Activated CD8-positive, alpha-beta T cell treated with anti-CD3 and anti-CD28 coated beads for 36 hours (primary cell): ENCODE measurements at regions of chr3 and their contacts with region 1.

Region 1: DNA sequence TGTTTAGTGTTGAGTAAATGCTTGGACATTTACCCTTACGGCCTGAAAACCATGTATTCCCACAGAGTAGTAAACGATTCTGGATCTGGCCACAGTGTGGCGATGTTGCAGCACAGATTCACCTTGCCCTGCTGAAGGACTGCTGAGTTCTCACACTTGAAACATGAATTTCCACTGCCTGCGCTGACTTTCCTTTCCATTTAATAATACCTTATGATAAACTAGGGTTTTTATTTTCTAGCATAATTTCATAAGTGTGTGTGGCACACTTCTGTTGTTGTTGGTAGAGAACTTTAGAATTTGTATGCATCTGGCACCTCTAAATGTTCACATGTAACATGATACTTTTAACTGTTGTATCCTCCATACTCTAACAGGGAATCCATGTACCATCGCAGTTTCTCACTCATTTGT is 53.9 kb downstream of the C3orf38 start:
- DNase-seq: peak; percentile 76
- ATAC-seq: peak; percentile 89
- H3K4me3 Mint-ChIP-seq: no peak overlapping the region
- H3K27ac Mint-ChIP-seq: no peak overlapping the region
- H3K4me1 Mint-ChIP-seq: no peaks in the 10 kb centered on the region
- H3K27me3 Mint-ChIP-seq: peaks cover 2% of the 10 kb centered on the region
- CTCF ChIP-seq: peak; percentile 83

Region 2: DNA sequence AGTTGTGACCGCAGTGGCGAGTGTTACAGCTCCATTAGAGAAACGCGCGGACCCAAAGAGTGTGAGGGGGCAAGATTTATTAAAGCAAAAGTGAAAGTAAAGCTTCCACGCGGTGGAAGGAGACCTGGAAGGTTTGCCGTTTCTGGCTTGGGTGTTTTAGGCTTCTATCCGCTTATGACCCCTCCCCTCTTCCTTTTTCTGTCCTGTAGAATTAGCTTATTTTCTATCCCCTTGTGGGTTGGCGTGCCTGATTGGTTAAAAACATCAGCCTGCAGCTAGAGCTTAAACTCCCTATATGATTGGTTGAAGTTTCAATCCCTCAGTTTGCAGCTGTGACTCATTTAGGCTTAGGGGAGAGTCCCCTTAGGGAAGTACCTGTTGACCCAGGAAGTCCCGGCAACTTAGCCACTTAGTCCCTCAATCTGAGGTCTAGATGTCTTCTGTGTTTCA is 14.3 kb before region 1 on chr3:
- CTCF ChIA-PET with region 1: no interaction called
- POLR2A ChIA-PET with region 1: no interaction called
- intact Hi-C with region 1: no loop called
- DNase-seq: peak; percentile 41
- ATAC-seq: peak; percentile 92
- H3K4me3 Mint-ChIP-seq: no peak overlapping the region
- H3K27ac Mint-ChIP-seq: no peak overlapping the region
- H3K4me1 Mint-ChIP-seq: peaks cover 8% of the 10 kb centered on the region
- H3K27me3 Mint-ChIP-seq: no peaks in the 10 kb centered on the region
- CTCF ChIP-seq: no peak

Region 3: GRCh38 chr3:89107461-89108290 is 904.0 kb after region 1 on chr3 and contains the start of gene EPHA3:
- CTCF ChIA-PET with region 1: no interaction called
- POLR2A ChIA-PET with region 1: no interaction called
- intact Hi-C with region 1: loop called (anchors 10 kb)
- DNase-seq: peak; percentile 59
- ATAC-seq: peak; percentile 80
- H3K4me3 Mint-ChIP-seq: peak within 1 kb of the TSS; percentile 60
- H3K27ac Mint-ChIP-seq: no peak within 1 kb of the TSS
- H3K4me1 Mint-ChIP-seq: peaks cover 12% of the 10 kb centered on the region
- H3K27me3 Mint-ChIP-seq: peaks cover 16% of the 10 kb centered on the region
- CTCF ChIP-seq: no peak
- total RNA-seq, gene EPHA3: not detected